Activated CD4-positive, alpha-beta memory T cell treated with anti-CD3 and anti-CD28 coated beads, Interleukin-2, amount 10 ng/mL, durations not matched to agents 7 days and 5 days (primary cell): ENCODE measurements at regions of chr2 and their contacts with region 1.

Region 1: DNA sequence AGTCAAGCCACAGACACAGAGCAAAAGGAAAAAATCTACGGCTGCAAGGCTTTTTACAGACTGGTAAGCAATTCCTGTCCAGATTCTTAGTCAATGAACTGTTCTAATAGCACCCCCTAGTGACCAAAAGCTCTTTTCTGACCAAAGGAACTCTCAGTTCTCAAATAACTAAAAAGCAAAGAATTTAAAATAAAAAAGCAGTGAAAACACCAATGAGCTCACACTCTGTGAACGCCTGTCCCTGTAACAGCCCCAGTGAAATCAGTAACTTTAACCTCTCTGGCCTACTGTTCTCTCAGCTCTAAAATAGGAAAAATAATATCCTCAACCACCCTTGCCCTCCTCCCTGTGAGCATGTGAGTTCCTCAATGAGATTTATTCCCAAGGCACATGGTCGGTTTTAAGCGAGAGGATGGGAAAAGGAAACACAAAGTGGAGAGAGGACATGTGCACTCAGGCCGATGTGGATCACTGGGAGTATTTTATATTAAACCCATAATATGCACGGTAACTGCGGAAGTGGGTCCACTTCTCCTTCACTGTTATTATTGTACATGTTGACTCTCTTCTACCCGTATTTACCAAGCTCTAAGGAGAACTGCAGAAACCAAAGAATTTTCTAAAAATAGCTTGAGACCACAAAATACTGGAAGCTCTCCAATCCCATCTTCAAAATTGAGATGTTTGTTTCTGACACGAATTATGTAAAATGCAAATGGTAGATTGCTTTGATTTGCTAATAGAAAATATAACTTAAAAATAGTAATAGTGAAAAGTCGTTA is 128.5 kb downstream of the STK39 start:
- DNase-seq: no peak
- H3K4me3 Mint-ChIP-seq: no peak overlapping the region
- H3K27ac Mint-ChIP-seq: no peak overlapping the region
- H3K4me1 Mint-ChIP-seq: no peaks in the 10 kb centered on the region
- H3K27me3 Mint-ChIP-seq: no peaks in the 10 kb centered on the region

Region 2: GRCh38 chr2:167964650-167965413 is 154.1 kb before region 1 on chr2:
- CTCF ChIA-PET with region 1: interaction called, 38 read pairs
- POLR2A ChIA-PET with region 1: no interaction called
- DNase-seq: no peak
- H3K4me3 Mint-ChIP-seq: no peak overlapping the region
- H3K27ac Mint-ChIP-seq: no peak overlapping the region
- H3K4me1 Mint-ChIP-seq: peaks cover 19% of the 10 kb centered on the region
- H3K27me3 Mint-ChIP-seq: no peaks in the 10 kb centered on the region

Region 3: DNA sequence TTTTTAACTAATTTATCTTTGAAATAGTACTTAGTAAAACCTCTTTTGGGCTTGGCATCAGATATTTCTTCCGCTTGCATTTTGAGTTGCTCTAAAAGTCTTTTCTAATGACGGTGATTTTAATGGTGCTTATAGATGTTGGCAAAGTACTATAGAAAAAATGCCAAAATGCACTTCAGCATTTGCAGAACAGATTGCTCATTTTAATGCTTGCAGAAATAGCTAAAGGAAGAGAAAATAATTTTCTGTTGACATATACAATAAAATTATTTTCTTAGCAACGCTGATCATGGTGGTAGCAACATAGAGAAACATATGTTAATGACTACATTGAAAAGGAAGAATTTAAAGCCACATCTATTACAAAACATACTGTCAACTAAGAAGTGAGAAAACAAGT is 42.2 kb before region 1 on chr2:
- CTCF ChIA-PET with region 1: no interaction called
- POLR2A ChIA-PET with region 1: no interaction called
- DNase-seq: no peak
- H3K4me3 Mint-ChIP-seq: no peak overlapping the region
- H3K27ac Mint-ChIP-seq: no peak overlapping the region
- H3K4me1 Mint-ChIP-seq: peaks cover 4% of the 10 kb centered on the region
- H3K27me3 Mint-ChIP-seq: no peaks in the 10 kb centered on the region

Region 4: DNA sequence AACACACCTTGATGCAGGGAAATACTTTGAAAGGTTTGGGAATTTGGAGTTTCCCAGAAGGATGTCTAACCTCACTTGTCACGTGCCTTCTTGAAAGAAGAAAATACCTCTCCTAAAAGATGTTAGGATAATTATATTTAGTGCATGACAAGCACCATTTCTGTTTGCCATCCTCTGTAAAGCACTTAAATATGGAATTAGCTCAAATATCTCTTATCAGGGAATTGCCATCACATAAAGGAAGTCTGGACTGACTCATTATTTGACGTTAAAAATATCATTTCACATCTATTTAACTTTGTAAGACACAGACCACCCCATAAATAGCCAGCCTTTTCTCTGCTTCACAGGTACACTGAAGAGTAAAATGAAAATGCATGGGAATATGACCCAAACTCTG is 11.6 kb before region 1 on chr2:
- CTCF ChIA-PET with region 1: interaction called, 23 read pairs
- POLR2A ChIA-PET with region 1: no interaction called
- DNase-seq: no peak
- H3K4me3 Mint-ChIP-seq: no peak overlapping the region
- H3K27ac Mint-ChIP-seq: no peak overlapping the region
- H3K4me1 Mint-ChIP-seq: no peaks in the 10 kb centered on the region
- H3K27me3 Mint-ChIP-seq: no peaks in the 10 kb centered on the region

Region 5: GRCh38 chr2:168130346-168130745 is 11.4 kb after region 1 on chr2:
- CTCF ChIA-PET with region 1: interaction called, 29 read pairs
- POLR2A ChIA-PET with region 1: no interaction called
- DNase-seq: no peak
- H3K4me3 Mint-ChIP-seq: no peak overlapping the region
- H3K27ac Mint-ChIP-seq: no peak overlapping the region
- H3K4me1 Mint-ChIP-seq: no peaks in the 10 kb centered on the region
- H3K27me3 Mint-ChIP-seq: no peaks in the 10 kb centered on the region

Region 6: GRCh38 chr2:168136392-168136977 is 17.6 kb after region 1 on chr2:
- CTCF ChIA-PET with region 1: interaction called, 29 read pairs
- POLR2A ChIA-PET with region 1: no interaction called
- DNase-seq: no peak
- H3K4me3 Mint-ChIP-seq: no peak overlapping the region
- H3K27ac Mint-ChIP-seq: no peak overlapping the region
- H3K4me1 Mint-ChIP-seq: peaks cover 12% of the 10 kb centered on the region
- H3K27me3 Mint-ChIP-seq: no peaks in the 10 kb centered on the region

Region 7: DNA sequence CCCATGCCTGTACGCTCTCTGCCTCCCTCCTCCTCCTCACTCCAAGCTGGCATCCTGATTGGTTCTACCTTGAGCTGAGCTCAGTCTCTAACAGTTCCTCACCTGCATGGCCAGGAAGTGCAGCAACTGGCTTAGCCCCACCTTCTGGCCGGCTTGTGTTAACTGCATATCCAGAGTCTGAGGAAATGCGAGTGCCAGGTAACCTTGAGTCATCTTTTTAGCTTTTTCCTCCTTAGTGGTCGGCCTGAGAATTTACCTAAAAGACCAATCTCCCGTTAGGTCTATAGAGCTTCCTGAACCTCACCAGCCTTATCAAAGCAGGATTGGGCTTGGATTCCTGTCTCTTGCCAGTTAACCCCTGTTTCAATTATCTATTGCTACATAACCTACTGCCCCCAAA is 217.9 kb after region 1 on chr2:
- CTCF ChIA-PET with region 1: interaction called, 16 read pairs
- POLR2A ChIA-PET with region 1: no interaction called
- DNase-seq: peak; percentile 62
- H3K4me3 Mint-ChIP-seq: no peak overlapping the region
- H3K27ac Mint-ChIP-seq: no peak overlapping the region
- H3K4me1 Mint-ChIP-seq: peaks cover 5% of the 10 kb centered on the region
- H3K27me3 Mint-ChIP-seq: peaks cover 6% of the 10 kb centered on the region